ENCODE measurements at regions of chr12 and their contacts with region 1.

Region 1: GRCh38 chr12:93742110-93742934 is 65.1 kb downstream of the CRADD start:
- ATAC-seq: peak; percentile 91 to 98 (median 96)
- H3K4me3 ChIP-seq: peak overlapping the region; percentile 27 to 45 (median 35)
- H3K27ac ChIP-seq: peak overlapping the region; percentile 43 to 75
- H3K4me1 ChIP-seq: peaks cover 11 to 32% of the 10 kb centered on the region in 2 donors

Region 2: DNA sequence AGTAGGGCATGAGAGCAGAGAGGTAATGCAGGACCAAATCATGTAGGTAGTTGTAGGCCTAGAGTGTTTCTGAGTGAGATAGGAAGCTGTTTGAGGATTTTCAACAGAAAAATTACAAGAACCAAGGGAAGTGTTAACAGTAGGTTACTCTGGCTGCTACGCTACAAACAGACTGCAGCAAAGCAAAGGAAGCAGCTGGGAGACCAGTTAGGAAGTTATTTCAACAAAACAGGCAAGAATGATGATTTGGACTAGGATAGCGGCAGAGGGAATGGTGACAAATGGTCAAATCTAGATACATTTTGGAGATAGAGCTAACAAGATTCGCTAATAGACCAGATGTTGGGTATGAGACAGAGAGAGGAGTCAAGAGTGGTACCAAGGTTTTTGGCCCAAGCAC is 248.2 kb before region 1 on chr12:
- in situ Hi-C with region 1: no loop called
- ATAC-seq: no peak
- H3K4me3 ChIP-seq: no peak overlapping the region
- H3K27ac ChIP-seq: no peak overlapping the region
- H3K4me1 ChIP-seq: no peaks in the 10 kb centered on the region

Region 3: GRCh38 chr12:93569656-93570551 is 172.4 kb before region 1 on chr12:
- in situ Hi-C with region 1: loop called in 2 of 9 experiments (anchors 25 kb)
- ATAC-seq: peak; percentile 40 to 67 (median 62)
- H3K4me3 ChIP-seq: peak overlapping the region; percentile 54 to 87 (median 58)
- H3K27ac ChIP-seq: peak overlapping the region; percentile 26 to 69
- H3K4me1 ChIP-seq: peaks cover 0 to 11% of the 10 kb centered on the region in 2 donors

Region 4: GRCh38 chr12:93591137-93591868 is 151.0 kb before region 1 on chr12:
- in situ Hi-C with region 1: loop called in 1 of 9 experiments (anchors 25 kb)
- ATAC-seq: peak; percentile 89 to 99 (median 98)
- H3K4me3 ChIP-seq: peak overlapping the region; percentile 28 to 43 (median 35)
- H3K27ac ChIP-seq: no peak overlapping the region
- H3K4me1 ChIP-seq: no peaks in the 10 kb centered on the region

Region 5: GRCh38 chr12:93994721-93995120 is 252.4 kb after region 1 on chr12:
- in situ Hi-C with region 1: no loop called
- ATAC-seq: no peak
- H3K4me3 ChIP-seq: no peak overlapping the region
- H3K27ac ChIP-seq: no peak overlapping the region
- H3K4me1 ChIP-seq: peaks cover 3 to 9% of the 10 kb centered on the region in 2 donors

Measured in motor neuron (in vitro differentiated cells).